Activated CD8-positive, alpha-beta T cell treated with anti-CD3 and anti-CD28 coated beads for 36 hours (primary cell): ENCODE measurements at regions of chr12 and their contacts with region 1.

Region 1: GRCh38 chr12:85468356-85469157 is 188.5 kb downstream of the ALX1 start:
- DNase-seq: peak; percentile 60
- ATAC-seq: peak; percentile 84
- H3K4me3 Mint-ChIP-seq: peak overlapping the region; percentile 70
- H3K27ac Mint-ChIP-seq: peak overlapping the region; percentile 45
- H3K4me1 Mint-ChIP-seq: peaks cover 12% of the 10 kb centered on the region
- H3K27me3 Mint-ChIP-seq: no peaks in the 10 kb centered on the region
- CTCF ChIP-seq: peak; percentile 63

Region 2: GRCh38 chr12:85363382-85364190 is 105.0 kb before region 1 on chr12:
- CTCF ChIA-PET with region 1: no interaction called
- POLR2A ChIA-PET with region 1: no interaction called
- intact Hi-C with region 1: no loop called
- DNase-seq: no peak
- ATAC-seq: no peak
- H3K4me3 Mint-ChIP-seq: no peak overlapping the region
- H3K27ac Mint-ChIP-seq: no peak overlapping the region
- H3K4me1 Mint-ChIP-seq: no peaks in the 10 kb centered on the region
- H3K27me3 Mint-ChIP-seq: no peaks in the 10 kb centered on the region
- CTCF ChIP-seq: no peak

Region 3: GRCh38 chr12:85866986-85867776 is 398.6 kb after region 1 on chr12:
- CTCF ChIA-PET with region 1: interaction called, 21 read pairs
- POLR2A ChIA-PET with region 1: no interaction called
- intact Hi-C with region 1: loop called (anchors 5 kb)
- DNase-seq: peak; percentile 39
- ATAC-seq: peak; percentile 58
- H3K4me3 Mint-ChIP-seq: no peak overlapping the region
- H3K27ac Mint-ChIP-seq: no peak overlapping the region
- H3K4me1 Mint-ChIP-seq: no peaks in the 10 kb centered on the region
- H3K27me3 Mint-ChIP-seq: no peaks in the 10 kb centered on the region
- CTCF ChIP-seq: peak; percentile 56

Region 4: GRCh38 chr12:85872497-85873091 is 404.0 kb after region 1 on chr12:
- CTCF ChIA-PET with region 1: interaction called, 21 read pairs
- POLR2A ChIA-PET with region 1: no interaction called
- intact Hi-C with region 1: loop called (anchors 5 kb)
- DNase-seq: no peak
- ATAC-seq: peak; percentile 55
- H3K4me3 Mint-ChIP-seq: no peak overlapping the region
- H3K27ac Mint-ChIP-seq: no peak overlapping the region
- H3K4me1 Mint-ChIP-seq: no peaks in the 10 kb centered on the region
- H3K27me3 Mint-ChIP-seq: no peaks in the 10 kb centered on the region
- CTCF ChIP-seq: peak; percentile 71

Region 5: GRCh38 chr12:85920324-85920947 is 451.9 kb after region 1 on chr12:
- CTCF ChIA-PET with region 1: no interaction called
- POLR2A ChIA-PET with region 1: no interaction called
- intact Hi-C with region 1: loop called (anchors 2 kb)
- DNase-seq: no peak
- ATAC-seq: no peak
- H3K4me3 Mint-ChIP-seq: no peak overlapping the region
- H3K27ac Mint-ChIP-seq: no peak overlapping the region
- H3K4me1 Mint-ChIP-seq: no peaks in the 10 kb centered on the region
- H3K27me3 Mint-ChIP-seq: no peaks in the 10 kb centered on the region
- CTCF ChIP-seq: peak; percentile 53